ENCODE measurements at regions of chr16 and their contacts with region 1.

Region 1: GRCh38 chr16:19521471-19522396 is at the start of gene GDE1:
- DNase-seq: peak; percentile 90
- H3K4me3 Mint-ChIP-seq: peak within 1 kb of the TSS; percentile 97
- H3K27ac Mint-ChIP-seq: peak within 1 kb of the TSS; percentile 90
- H3K4me1 Mint-ChIP-seq: peaks cover 54% of the 10 kb centered on the region
- H3K27me3 Mint-ChIP-seq: no peaks in the 10 kb centered on the region
- total RNA-seq, gene GDE1: 32.4 and 32.8 TPM in 2 replicates

Region 2: DNA sequence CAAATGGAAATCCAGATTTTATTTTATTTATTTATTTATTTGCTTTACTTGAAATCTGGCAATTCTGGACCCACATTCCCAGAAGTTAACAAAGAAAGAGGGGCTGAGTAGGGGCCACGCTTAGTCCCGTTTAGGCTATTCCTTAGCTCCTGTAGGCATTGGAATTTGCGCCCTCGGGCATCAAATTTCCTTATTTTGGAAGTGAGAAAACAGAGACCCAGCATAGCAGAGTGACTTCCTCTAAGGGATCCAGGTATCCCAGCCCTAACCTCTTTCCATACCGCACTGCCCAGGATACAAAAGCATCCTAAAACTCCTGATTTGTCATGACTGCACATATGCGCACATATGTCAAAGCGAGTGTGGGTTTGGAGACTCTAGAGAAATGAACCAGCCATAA is 576.5 kb before region 1 on chr16:
- intact Hi-C with region 1: loop called (anchors 5 kb)
- DNase-seq: no peak
- H3K4me3 Mint-ChIP-seq: no peak overlapping the region
- H3K27ac Mint-ChIP-seq: no peak overlapping the region
- H3K4me1 Mint-ChIP-seq: peaks cover 20% of the 10 kb centered on the region
- H3K27me3 Mint-ChIP-seq: peaks cover 11% of the 10 kb centered on the region

Region 3: GRCh38 chr16:19113453-19114351 is 408.0 kb before region 1 on chr16 and contains the start of gene ITPRIPL2:
- intact Hi-C with region 1: loop called (anchors 5 kb)
- DNase-seq: peak; percentile 43
- H3K4me3 Mint-ChIP-seq: peak within 1 kb of the TSS; percentile 83
- H3K27ac Mint-ChIP-seq: peak within 1 kb of the TSS; percentile 88
- H3K4me1 Mint-ChIP-seq: peaks cover 39% of the 10 kb centered on the region
- H3K27me3 Mint-ChIP-seq: no peaks in the 10 kb centered on the region
- total RNA-seq, gene ITPRIPL2: 44.4 and 48.0 TPM in 2 replicates

Region 4: DNA sequence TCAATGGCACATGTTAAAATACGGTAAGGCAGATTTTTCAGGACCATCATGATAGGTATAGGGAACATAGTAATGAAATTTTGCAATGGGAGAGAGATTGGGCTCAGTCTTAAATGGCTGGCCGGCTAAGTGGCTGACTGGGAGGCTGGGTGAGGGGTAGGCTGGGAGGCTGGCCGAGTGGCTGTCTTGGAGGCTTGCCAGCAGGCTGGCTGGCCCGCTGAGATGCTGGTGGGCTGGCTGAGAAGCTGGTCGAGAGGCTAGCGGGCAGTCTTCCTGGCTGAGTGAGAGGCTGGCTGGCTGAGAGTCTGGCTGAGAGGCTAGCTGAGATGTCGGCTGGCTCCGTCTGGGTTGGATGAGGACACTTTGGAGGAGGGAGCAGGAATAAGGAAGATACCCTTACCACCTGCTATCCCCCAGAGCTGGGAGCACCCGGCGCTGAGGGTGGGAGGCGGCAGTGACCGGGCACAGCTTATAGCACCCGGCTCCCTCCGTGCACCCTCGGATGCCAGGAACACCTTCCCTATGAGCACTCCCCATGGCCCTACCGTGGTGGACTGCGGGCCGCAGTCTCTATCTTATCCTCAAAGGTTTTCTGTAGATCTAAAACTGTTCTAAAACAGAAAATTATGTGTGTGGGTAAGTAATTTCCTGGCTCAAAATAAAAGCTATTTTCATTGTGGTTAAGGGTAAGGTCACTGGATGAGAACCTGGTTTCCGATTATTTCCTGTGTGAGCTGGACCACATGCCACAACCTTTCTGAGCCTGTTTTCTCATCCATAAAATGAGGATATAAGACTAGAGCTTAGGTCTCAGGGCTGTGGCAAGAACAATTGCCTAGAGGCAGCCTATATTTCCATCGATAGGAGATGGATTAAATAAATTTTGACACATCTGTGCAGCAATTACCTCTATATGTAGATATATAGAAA is 138.6 kb before region 1 on chr16:
- intact Hi-C with region 1: loop called (anchors 5 kb)
- DNase-seq: peak; percentile 16
- H3K4me3 Mint-ChIP-seq: peak overlapping the region; percentile 32
- H3K27ac Mint-ChIP-seq: no peak overlapping the region
- H3K4me1 Mint-ChIP-seq: peaks cover 53% of the 10 kb centered on the region
- H3K27me3 Mint-ChIP-seq: peaks cover 26% of the 10 kb centered on the region

Region 5: DNA sequence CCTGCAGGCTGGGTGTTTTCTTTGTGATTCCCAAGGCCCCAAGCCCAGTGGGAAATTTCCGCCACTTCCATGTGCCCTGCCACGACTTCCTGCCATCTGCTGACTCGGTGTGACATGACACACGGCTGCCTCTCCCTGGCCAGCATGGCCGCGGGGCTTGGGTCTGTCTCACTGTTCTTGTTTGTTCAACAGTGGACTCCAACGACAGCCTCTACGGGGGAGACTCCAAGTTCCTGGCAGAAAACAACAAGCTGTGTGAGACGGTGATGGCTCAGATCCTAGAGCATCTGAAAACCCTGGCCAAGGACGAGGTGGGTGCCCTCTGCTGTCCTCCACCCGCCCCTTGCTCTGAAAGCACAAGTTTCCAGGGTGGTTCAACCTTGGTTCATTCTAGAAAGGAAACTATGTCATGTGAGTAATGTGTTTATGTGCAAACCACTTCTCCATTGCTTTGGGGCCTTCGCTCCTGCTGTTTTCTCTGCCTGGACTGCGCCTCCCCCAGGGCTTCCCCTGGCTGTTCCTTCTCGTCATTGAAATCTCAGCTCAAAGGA is 169.5 kb after region 1 on chr16:
- intact Hi-C with region 1: no loop called
- DNase-seq: no peak
- H3K4me3 Mint-ChIP-seq: no peak overlapping the region
- H3K27ac Mint-ChIP-seq: no peak overlapping the region
- H3K4me1 Mint-ChIP-seq: peaks cover 16% of the 10 kb centered on the region
- H3K27me3 Mint-ChIP-seq: no peaks in the 10 kb centered on the region

Measured in activated T-helper 2 cell treated with anti-CD3 and anti-CD28 coated beads, Interferon-gamma antibody, Interleukin-2, Interleukin-4, amounts not matched to agents 10 μg/mL and 5 μg/mL and 100 μg/mL, durations not matched to agents 14 hours and 24 hours and 36 hours (primary cell).